Activated CD4-positive, alpha-beta memory T cell treated with anti-CD3 and anti-CD28 coated beads, Interleukin-2, amount 10 ng/mL, durations not matched to agents 7 days and 5 days (primary cell): ENCODE measurements at regions of chr12 and their contacts with region 1.

Region 1: GRCh38 chr12:46268590-46269558 is at the start of gene SLC38A1:
- DNase-seq: peak; percentile 92
- H3K4me3 Mint-ChIP-seq: no peak within 1 kb of the TSS
- H3K27ac Mint-ChIP-seq: no peak within 1 kb of the TSS
- H3K4me1 Mint-ChIP-seq: peaks cover 28% of the 10 kb centered on the region
- H3K27me3 Mint-ChIP-seq: no peaks in the 10 kb centered on the region
- total RNA-seq, gene SLC38A1: 209 to 214 TPM

Region 2: GRCh38 chr12:46198913-46199312 is 70.0 kb before region 1 on chr12:
- CTCF ChIA-PET with region 1: no interaction called
- POLR2A ChIA-PET with region 1: interaction called, 15 read pairs
- DNase-seq: no peak
- H3K4me3 Mint-ChIP-seq: no peak overlapping the region
- H3K27ac Mint-ChIP-seq: peak overlapping the region; percentile 26
- H3K4me1 Mint-ChIP-seq: no peaks in the 10 kb centered on the region
- H3K27me3 Mint-ChIP-seq: no peaks in the 10 kb centered on the region

Region 3: GRCh38 chr12:46224386-46224785 is 44.5 kb before region 1 on chr12:
- CTCF ChIA-PET with region 1: no interaction called
- POLR2A ChIA-PET with region 1: interaction called, 449 read pairs
- DNase-seq: no peak
- H3K4me3 Mint-ChIP-seq: no peak overlapping the region
- H3K27ac Mint-ChIP-seq: peak overlapping the region; percentile 52
- H3K4me1 Mint-ChIP-seq: peaks cover 73% of the 10 kb centered on the region
- H3K27me3 Mint-ChIP-seq: no peaks in the 10 kb centered on the region

Region 4: DNA sequence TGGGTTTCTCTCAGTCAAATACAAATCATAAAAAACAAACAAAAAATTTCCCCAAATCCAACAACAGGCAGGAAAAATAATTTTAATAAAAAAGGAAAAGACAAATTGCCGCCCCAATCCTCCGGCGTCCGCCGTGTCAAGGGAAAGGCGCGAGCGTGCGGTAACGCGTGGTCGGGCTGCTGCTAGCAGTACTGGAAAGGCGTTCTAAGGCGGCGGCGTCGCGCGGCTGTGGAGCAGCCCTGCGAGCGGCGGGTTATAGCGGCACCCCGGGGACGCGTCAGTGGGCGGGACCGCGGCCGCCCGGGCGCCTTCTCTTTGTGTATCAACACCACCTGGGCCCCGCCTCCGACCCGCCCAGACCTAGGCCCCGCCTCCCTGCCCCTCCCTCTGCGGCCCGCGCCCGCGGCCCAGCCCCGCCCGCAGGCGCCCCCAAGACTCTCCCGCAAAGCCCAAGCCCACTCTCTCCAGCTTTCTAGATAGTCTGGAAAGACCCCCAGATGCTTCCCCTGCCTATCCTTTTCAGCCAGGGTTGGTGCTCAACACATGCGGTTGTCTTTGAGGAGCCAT is 103.8 kb after region 1 on chr12 and contains the start of gene SLC38A2:
- CTCF ChIA-PET with region 1: interaction called, 4 read pairs
- POLR2A ChIA-PET with region 1: interaction called, 101 read pairs
- DNase-seq: peak; percentile 97
- H3K4me3 Mint-ChIP-seq: peak within 1 kb of the TSS; percentile 91
- H3K27ac Mint-ChIP-seq: peak within 1 kb of the TSS; percentile 99
- H3K4me1 Mint-ChIP-seq: peaks cover 64% of the 10 kb centered on the region
- H3K27me3 Mint-ChIP-seq: no peaks in the 10 kb centered on the region
- total RNA-seq, gene SLC38A2: 265 to 267 TPM

Region 5: GRCh38 chr12:46459861-46460545 is 191.1 kb after region 1 on chr12:
- CTCF ChIA-PET with region 1: no interaction called
- POLR2A ChIA-PET with region 1: interaction called, 29 read pairs
- DNase-seq: peak; percentile 23
- H3K4me3 Mint-ChIP-seq: peak overlapping the region; percentile 60
- H3K27ac Mint-ChIP-seq: peak overlapping the region; percentile 94
- H3K4me1 Mint-ChIP-seq: peaks cover 64% of the 10 kb centered on the region
- H3K27me3 Mint-ChIP-seq: no peaks in the 10 kb centered on the region

Region 6: GRCh38 chr12:47216150-47216677 is 947.3 kb after region 1 on chr12:
- CTCF ChIA-PET with region 1: no interaction called
- POLR2A ChIA-PET with region 1: interaction called, 48 read pairs
- DNase-seq: peak; percentile 87
- H3K4me3 Mint-ChIP-seq: peak overlapping the region; percentile 85
- H3K27ac Mint-ChIP-seq: peak overlapping the region; percentile 97
- H3K4me1 Mint-ChIP-seq: peaks cover 37% of the 10 kb centered on the region
- H3K27me3 Mint-ChIP-seq: no peaks in the 10 kb centered on the region